Panc1 (cell line): ENCODE measurements at regions of chr1 and their contacts with region 1.

Region 1: DNA sequence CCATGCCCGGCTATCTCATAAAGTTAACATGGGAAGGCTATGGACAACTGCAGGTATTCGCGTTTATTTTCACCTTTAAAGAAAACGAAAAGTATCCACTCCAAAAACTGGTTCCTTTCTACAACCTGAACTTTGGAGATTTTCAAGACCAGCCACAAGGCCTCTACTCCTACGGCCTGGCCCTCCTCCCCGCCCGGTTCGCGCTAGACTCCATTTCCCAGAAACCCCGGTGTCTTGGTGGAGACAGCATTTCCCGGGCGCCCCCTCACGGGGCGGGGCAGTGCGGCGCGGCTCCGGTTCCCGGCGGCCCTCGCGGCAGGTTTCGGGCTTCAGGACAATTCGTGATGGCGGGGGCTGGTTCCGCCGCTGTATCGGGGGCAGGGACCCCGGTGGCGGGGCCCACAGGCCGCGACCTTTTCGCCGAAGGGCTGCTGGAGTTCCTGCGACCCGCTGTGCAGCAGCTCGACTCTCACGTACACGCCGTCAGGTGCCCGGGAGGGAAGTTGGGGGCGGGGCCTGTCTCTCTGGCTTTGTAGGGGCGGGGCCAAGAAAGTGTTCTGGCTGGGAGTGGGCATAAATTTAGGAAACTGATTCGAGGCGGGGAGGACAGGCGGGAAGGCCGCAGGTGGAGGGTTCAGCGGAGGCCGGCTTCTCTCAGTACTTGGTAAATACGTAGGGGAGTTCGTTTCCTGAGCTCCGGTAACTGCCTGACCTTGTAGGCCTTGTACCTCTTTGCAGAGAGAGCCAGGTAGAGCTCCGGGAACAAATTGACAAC is at the start of gene SNAPIN:
- DNase-seq: peak; percentile 51
- ATAC-seq: peak; percentile 99
- H3K4me3 ChIP-seq: peak within 1 kb of the TSS; percentile 69 to 84
- H3K27ac ChIP-seq: peak within 1 kb of the TSS; percentile 88
- H3K4me1 ChIP-seq: peaks cover 11% of the 10 kb centered on the region; the same call in 1 of the 2 replicates
- H3K27me3 ChIP-seq: no peaks in the 10 kb centered on the region
- CTCF ChIP-seq: no peak
- total RNA-seq, gene SNAPIN: 46.8 TPM

Region 2: GRCh38 chr1:153494976-153495535 is 163.5 kb before region 1 on chr1:
- CTCF ChIA-PET with region 1: no interaction called
- POLR2A ChIA-PET with region 1: no interaction called
- in situ Hi-C with region 1: no loop called
- intact Hi-C with region 1: no loop called
- DNase-seq: no peak
- ATAC-seq: peak; percentile 83
- H3K4me3 ChIP-seq: no peak overlapping the region
- H3K27ac ChIP-seq: peak overlapping the region; percentile 25; the same call in 1 of the 2 replicates
- H3K4me1 ChIP-seq: peaks cover 13% of the 10 kb centered on the region
- H3K27me3 ChIP-seq: no peaks in the 10 kb centered on the region
- CTCF ChIP-seq: peak; percentile 94

Region 3: GRCh38 chr1:153510984-153511410 is 147.6 kb before region 1 on chr1:
- CTCF ChIA-PET with region 1: no interaction called
- POLR2A ChIA-PET with region 1: no interaction called
- in situ Hi-C with region 1: no loop called
- intact Hi-C with region 1: loop called (anchors 5 kb)
- DNase-seq: peak; percentile 65
- ATAC-seq: peak; percentile 87
- H3K4me3 ChIP-seq: no peak overlapping the region
- H3K27ac ChIP-seq: peak overlapping the region; percentile 79
- H3K4me1 ChIP-seq: peaks cover 47% of the 10 kb centered on the region
- H3K27me3 ChIP-seq: no peaks in the 10 kb centered on the region
- CTCF ChIP-seq: peak; percentile 96

Region 4: DNA sequence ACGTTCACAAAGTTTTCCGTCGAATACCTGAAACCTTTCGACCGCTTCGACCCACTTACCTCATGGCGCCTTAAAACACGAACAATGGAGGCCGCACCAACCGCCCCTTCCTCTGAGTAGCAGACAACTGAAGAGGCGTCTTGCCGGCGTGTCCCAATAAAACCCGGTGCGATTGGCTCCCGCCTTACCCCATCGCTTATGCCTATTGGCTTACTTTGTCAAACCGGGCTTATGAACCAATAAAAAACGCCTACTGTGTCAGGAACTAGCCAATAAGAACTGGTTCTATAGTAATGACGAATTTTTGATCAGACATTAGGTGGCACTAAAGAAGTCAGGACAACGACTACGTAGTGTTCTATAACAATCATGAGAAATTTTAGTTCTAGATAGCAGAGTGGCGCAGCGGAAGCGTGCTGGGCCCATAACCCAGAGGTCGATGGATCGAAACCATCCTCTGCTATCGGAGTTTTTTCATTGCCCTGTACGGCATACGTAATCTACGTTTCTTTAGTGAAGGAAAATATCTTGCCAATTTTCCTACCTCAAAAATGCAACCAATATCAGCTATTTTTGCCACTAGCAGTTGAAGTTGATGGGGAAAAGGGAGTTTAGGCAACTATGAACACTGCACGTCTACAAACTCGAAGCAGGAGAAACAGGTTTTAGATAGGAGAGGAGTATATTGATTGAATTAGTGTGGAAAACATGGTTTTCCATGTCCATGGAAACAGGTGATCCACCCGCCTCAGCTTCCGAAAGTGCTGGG is 12.5 kb after region 1 on chr1 and contains the start of gene ILF2:
- CTCF ChIA-PET with region 1: no interaction called
- POLR2A ChIA-PET with region 1: interaction called, 10 read pairs
- in situ Hi-C with region 1: no loop called
- intact Hi-C with region 1: no loop called
- DNase-seq: peak; percentile 100
- ATAC-seq: peak; percentile 94
- H3K4me3 ChIP-seq: peak within 1 kb of the TSS; percentile 85 to 96
- H3K27ac ChIP-seq: peak within 1 kb of the TSS; percentile 94
- H3K4me1 ChIP-seq: peaks cover 14% of the 10 kb centered on the region; the same call in 1 of the 2 replicates
- H3K27me3 ChIP-seq: no peaks in the 10 kb centered on the region
- CTCF ChIP-seq: peak; percentile 25; the same call in 1 of the 2 replicates
- total RNA-seq, gene ILF2: 221 TPM

Region 5: GRCh38 chr1:154521695-154522094 is 863.1 kb after region 1 on chr1:
- CTCF ChIA-PET with region 1: no interaction called
- POLR2A ChIA-PET with region 1: no interaction called
- in situ Hi-C with region 1: no loop called
- intact Hi-C with region 1: no loop called
- DNase-seq: no peak
- ATAC-seq: no peak
- H3K4me3 ChIP-seq: no peak overlapping the region
- H3K27ac ChIP-seq: no peak overlapping the region
- H3K4me1 ChIP-seq: no peaks in the 10 kb centered on the region
- H3K27me3 ChIP-seq: no peaks in the 10 kb centered on the region
- CTCF ChIP-seq: no peak